HCT116 (cell line): ENCODE measurements at regions of chr1 and their contacts with region 1.

Region 1: GRCh38 chr1:8409106-8409505 is 91.2 kb downstream of the SLC45A1 start:
- DNase-seq: no peak
- ATAC-seq: no peak
- H3K4me3 ChIP-seq: no peak overlapping the region
- H3K27ac ChIP-seq: no peak overlapping the region; the same call in none of the 2 replicates
- H3K4me1 ChIP-seq: peaks cover 6 to 21% of the 10 kb centered on the region in 2 experiments; a peak in 3 of 4 replicates
- H3K27me3 ChIP-seq: no peaks in the 10 kb centered on the region
- CTCF ChIP-seq: peak in 2 of 3 experiments; percentile 16 to 20; a peak in 3 of 6 replicates
- POLR2A ChIP-seq: no peak
- RAD21 ChIP-seq: peak; percentile 43

Region 2: DNA sequence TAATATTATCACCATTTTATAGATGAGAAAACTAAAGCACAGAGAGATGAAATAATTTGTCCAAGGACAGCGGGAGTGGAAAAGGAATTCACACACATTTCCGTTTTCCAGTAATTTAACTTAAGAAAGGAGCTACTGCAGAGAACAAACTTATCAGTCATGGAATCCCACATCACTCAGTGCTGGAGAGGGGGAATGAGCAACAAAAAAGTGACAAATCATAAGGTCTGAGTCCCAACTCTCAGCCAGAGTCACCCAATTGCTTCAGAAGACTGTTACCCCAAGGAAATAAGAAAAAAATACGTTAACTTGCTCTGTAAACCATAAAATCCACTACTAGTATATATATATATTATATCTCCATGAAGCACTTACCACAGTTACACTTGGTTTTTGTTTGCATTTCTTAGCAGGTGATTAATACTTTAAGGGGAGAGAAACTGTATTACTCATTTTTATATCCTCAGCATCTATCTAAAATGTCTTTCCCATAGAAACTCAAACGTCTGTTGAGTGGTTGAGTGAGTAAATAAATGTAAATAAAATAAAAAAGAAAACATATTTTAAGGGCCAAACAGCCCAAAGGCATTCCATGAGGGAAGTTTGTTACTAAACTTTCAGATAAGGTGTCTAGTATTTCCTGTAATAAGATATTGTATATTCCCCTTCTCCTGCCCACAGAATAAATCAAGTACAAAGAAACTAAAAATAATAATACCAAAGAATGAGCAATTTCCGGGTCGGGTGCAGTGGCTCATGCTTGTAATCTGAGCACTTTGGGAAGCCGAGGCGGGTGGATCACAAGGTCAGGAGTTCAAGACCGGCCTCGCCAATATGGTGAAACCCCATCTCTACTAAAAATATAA is 14.4 kb before region 1 on chr1:
- CTCF ChIA-PET with region 1: no interaction called
- POLR2A ChIA-PET with region 1: no interaction called
- RAD21 ChIA-PET with region 1: no interaction called
- intact Hi-C with region 1: no loop called
- DNase-seq: no peak
- ATAC-seq: no peak
- H3K4me3 ChIP-seq: no peak overlapping the region
- H3K27ac ChIP-seq: no peak overlapping the region
- H3K4me1 ChIP-seq: peaks cover 3 to 23% of the 10 kb centered on the region in 2 experiments; a peak in 2 of 4 replicates
- H3K27me3 ChIP-seq: no peaks in the 10 kb centered on the region
- CTCF ChIP-seq: no peak
- POLR2A ChIP-seq: no peak
- RAD21 ChIP-seq: no peak

Region 3: DNA sequence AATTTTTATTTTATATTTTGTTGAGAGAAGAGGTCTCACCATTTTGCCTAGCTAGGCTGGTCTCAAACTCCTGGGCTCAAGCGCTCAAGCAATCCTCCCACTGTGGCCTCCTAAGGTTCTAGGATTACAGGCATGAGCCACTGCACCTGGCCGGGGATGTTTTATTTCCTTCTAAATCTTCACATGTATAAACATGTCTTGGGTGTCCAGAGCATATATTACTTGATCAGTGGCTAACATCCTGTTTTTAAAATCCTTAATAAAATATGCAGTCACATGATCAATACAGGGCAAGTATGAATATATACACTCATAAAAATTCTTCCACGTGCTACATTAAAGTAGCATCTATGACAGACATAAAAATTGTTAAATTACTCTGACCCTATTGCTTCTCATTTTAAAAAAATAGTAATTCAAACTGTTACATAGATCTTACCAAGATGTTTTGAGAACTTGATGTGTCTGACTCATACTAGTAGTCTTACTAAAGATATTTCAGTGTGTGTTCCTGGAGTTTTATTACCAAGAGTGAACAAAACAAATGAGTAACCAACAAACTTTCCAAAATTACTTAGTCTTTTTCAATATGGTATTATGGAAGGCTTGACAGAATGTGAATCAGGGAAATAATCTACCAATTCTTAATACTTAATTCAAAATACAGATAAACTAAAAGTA is 131.3 kb after region 1 on chr1:
- CTCF ChIA-PET with region 1: no interaction called
- POLR2A ChIA-PET with region 1: no interaction called
- RAD21 ChIA-PET with region 1: no interaction called
- intact Hi-C with region 1: loop called (anchors 10 kb)
- DNase-seq: no peak
- ATAC-seq: no peak
- H3K4me3 ChIP-seq: no peak overlapping the region
- H3K27ac ChIP-seq: no peak overlapping the region
- H3K4me1 ChIP-seq: no peaks in the 10 kb centered on the region
- H3K27me3 ChIP-seq: no peaks in the 10 kb centered on the region
- CTCF ChIP-seq: no peak
- POLR2A ChIP-seq: no peak
- RAD21 ChIP-seq: no peak